Transverse colon (tissue), 4 donors: ENCODE measurements at regions of chr22 and their contacts with region 1.

Region 1: DNA sequence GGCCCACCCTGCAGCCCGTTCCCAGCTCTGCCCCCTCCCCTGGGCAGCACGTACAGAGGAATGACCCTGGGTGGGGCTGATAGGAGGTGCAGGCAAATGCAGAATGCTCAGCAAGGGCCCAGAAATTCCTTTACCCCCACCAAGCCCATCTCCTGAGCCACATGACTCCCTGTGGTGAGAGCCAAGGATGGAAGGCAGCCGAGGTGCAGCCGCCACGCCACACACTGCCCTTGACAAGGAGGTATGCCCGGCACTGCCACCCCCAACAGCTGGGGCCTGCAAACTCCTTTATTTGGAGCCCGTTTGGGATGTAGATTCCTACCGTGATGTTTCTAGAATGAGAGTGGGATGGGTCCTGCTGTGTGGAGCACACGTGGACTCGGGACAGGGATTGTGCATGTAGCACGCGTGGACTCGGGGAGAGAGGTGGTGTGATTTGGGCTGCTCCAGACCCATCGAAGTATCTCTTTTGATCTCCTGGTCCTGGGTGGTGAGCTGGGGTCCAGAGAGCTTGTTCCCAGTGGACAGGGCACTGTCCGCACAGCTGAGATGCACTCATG is 12.9 kb downstream of the GTSE1 start:
- DNase-seq: no peak
- H3K4me3 ChIP-seq: no peak overlapping the region
- H3K27ac ChIP-seq: no peak overlapping the region
- H3K4me1 ChIP-seq: no peaks in the 10 kb centered on the region
- H3K27me3 ChIP-seq: no peaks in the 10 kb centered on the region
- CTCF ChIP-seq: no peak
- EP300 ChIP-seq: no peak
- POLR2A ChIP-seq: no peak

Region 2: GRCh38 chr22:45597460-45598192 is 712.0 kb before region 1 on chr22:
- in situ Hi-C with region 1: no loop called
- intact Hi-C with region 1: no loop called
- DNase-seq: no peak
- H3K4me3 ChIP-seq: no peak overlapping the region
- H3K27ac ChIP-seq: no peak overlapping the region
- H3K4me1 ChIP-seq: peaks cover 0 to 5% (median 1%) of the 10 kb centered on the region in 4 donors
- H3K27me3 ChIP-seq: no peaks in the 10 kb centered on the region
- CTCF ChIP-seq: no peak
- EP300 ChIP-seq: no peak
- POLR2A ChIP-seq: no peak

Region 3: GRCh38 chr22:45994491-45995404 is 314.9 kb before region 1 on chr22:
- in situ Hi-C with region 1: no loop called
- intact Hi-C with region 1: loop called (anchors 10 kb)
- DNase-seq: peak; percentile 83
- H3K4me3 ChIP-seq: no peak overlapping the region
- H3K27ac ChIP-seq: no peak overlapping the region
- H3K4me1 ChIP-seq: peaks cover 16 to 49% (median 34%) of the 10 kb centered on the region in 4 donors
- H3K27me3 ChIP-seq: no peaks in the 10 kb centered on the region
- CTCF ChIP-seq: peak; percentile 96 to 99 (median 98)
- EP300 ChIP-seq: no peak
- POLR2A ChIP-seq: no peak

Region 4: DNA sequence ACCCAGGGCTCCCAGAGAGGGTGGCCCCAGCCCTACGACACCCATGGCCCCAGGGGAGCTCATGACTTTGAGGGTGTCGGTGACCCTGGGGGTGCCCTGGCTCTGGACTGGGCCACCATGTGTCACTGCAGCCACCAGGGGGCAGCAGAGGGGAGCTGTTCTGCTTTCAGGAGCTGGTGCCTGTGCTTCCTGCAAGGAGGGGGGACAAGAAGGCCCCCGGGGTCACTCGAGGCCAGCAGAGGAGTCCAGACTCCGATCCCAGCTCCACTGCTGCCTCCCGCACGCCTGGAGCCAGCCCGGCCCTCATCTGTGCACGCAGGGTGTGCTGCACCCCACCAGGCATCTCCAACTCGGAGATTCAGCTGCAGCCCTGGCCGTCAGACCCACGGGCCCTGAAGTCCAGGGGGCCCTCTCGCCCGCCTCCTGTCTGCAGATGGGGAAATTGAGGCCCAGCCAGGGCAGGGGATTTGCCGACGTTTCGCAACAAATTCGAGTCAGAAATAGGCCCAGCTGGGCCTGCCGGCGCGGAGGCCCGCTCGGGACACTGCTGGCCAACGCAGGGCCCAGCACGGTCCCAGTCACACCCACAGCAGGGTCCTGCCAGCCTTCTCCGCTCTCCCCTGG is 303.1 kb before region 1 on chr22:
- in situ Hi-C with region 1: loop called in 3 of 4 experiments (anchors 10 to 25 kb)
- intact Hi-C with region 1: no loop called
- DNase-seq: peak; percentile 92
- H3K4me3 ChIP-seq: peak overlapping the region in 1 of 4 donors; percentile 11
- H3K27ac ChIP-seq: peak overlapping the region; percentile 83 to 92 (median 88)
- H3K4me1 ChIP-seq: peaks cover 19 to 34% (median 24%) of the 10 kb centered on the region in 4 donors
- H3K27me3 ChIP-seq: no peaks in the 10 kb centered on the region
- CTCF ChIP-seq: peak; percentile 97 to 99 (median 98)
- EP300 ChIP-seq: no peak
- POLR2A ChIP-seq: no peak

Region 5: GRCh38 chr22:46122511-46122971 is 187.1 kb before region 1 on chr22:
- in situ Hi-C with region 1: loop called (anchors 5 to 10 kb)
- intact Hi-C with region 1: no loop called
- DNase-seq: peak; percentile 78
- H3K4me3 ChIP-seq: peak overlapping the region in 1 of 4 donors; percentile 7
- H3K27ac ChIP-seq: no peak overlapping the region
- H3K4me1 ChIP-seq: peaks cover 4 to 20% (median 14%) of the 10 kb centered on the region in 4 donors
- H3K27me3 ChIP-seq: no peaks in the 10 kb centered on the region
- CTCF ChIP-seq: peak; percentile 94 to 97 (median 96)
- EP300 ChIP-seq: no peak
- POLR2A ChIP-seq: no peak

Region 6: GRCh38 chr22:46129390-46130041 is 180.1 kb before region 1 on chr22:
- in situ Hi-C with region 1: loop called (anchors 5 to 10 kb)
- intact Hi-C with region 1: no loop called
- DNase-seq: peak; percentile 61
- H3K4me3 ChIP-seq: no peak overlapping the region
- H3K27ac ChIP-seq: peak overlapping the region; percentile 3 to 46 (median 34)
- H3K4me1 ChIP-seq: peaks cover 0 to 12% (median 10%) of the 10 kb centered on the region in 4 donors
- H3K27me3 ChIP-seq: no peaks in the 10 kb centered on the region
- CTCF ChIP-seq: no peak
- EP300 ChIP-seq: no peak
- POLR2A ChIP-seq: no peak

Region 7: DNA sequence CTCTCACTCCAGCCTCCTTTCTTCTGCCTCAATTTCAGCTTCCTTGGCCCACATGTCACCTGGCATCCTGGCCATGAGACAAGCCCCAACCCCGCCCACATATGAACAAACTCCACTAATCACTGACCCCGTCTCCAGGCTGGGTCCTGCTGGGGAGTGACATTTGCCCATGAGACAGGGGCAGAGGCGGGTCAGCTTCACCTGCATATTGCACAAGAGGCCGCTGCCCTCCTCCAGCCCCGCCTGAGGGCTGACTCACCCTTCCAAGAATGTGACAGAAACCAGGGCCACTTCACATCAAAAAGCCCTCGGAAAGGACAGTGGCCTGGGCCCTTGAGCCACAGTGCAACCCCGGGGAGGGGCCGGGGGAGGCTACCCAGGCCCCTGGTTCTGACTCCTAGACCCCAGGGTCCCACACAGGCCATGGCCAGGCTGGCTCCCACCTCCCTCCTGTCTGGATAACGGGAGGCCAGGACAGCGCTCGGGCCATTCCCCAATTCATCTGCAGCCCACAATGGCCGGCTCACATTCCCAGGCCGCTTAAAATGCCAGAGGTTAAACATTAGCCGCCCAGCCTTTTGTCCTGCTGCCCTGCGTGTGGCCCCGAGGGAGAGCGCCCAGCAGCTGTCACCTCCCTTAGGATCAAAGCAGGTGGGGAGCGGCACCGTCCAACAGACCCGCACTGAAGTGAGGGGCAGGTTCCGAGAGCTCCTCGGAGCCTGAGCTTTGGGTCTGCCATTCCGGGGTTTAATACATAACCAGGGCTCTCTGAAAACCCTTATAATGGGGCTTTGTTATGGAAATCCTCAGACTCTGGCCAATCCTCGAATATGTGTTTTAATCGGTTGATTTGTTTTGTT is 68.2 kb after region 1 on chr22:
- in situ Hi-C with region 1: no loop called
- intact Hi-C with region 1: no loop called
- DNase-seq: peak; percentile 81
- H3K4me3 ChIP-seq: no peak overlapping the region
- H3K27ac ChIP-seq: peak overlapping the region; percentile 26 to 59 (median 50)
- H3K4me1 ChIP-seq: peaks cover 17 to 54% (median 45%) of the 10 kb centered on the region in 4 donors
- H3K27me3 ChIP-seq: no peaks in the 10 kb centered on the region
- CTCF ChIP-seq: no peak
- EP300 ChIP-seq: no peak
- POLR2A ChIP-seq: no peak